ENCODE measurements at regions of chr9 and their contacts with region 1.

Region 1: DNA sequence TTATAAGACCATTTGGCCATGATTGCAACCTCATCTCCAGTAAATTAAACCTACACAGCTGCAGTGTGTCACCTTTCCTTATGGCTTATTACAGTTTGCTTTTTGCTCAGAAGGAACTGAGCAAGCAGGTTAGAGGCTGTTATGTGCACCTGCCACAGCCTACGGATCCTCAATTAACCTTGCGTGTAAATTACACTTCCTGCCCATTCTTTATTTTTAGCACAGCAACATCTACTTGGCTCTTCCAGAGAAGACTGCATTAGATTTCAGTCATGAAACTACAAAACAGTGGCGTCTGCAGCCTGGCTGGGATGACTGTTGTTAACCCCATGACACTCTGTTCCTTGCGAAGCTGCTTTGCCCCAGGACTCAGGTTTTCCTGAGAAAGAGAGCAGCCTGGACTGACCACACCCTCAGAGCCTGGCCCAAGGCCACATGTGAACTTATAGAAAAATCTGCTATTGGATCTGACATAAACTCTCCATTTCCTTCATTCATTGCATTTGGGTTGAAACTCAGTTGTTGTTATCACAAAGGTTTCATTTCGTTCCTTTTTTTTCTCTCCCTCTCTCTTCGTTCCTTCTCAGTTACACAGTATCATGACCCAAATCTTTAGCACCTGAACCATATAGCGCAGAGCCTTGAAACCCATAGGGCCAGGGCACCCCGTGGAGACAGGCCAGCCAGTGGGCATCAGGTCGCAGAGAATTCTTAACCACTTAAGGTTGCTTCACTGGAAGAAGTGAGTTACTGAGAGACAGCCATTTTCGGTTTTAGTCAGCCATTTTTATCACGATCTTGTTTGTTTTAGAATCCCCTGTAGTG is 138.6 kb downstream of the PALM2AKAP2 start:
- DNase-seq: no peak
- ATAC-seq: peak; percentile 24 to 58 (median 37)
- H3K4me3 ChIP-seq: no peak overlapping the region
- H3K27ac ChIP-seq: peak overlapping the region in 8 of 10 donors; percentile 7 to 59 (median 36)
- H3K4me1 ChIP-seq: peaks cover 0 to 75% (median 47%) of the 10 kb centered on the region in 9 donors
- H3K27me3 ChIP-seq: no peaks in the 10 kb centered on the region
- CTCF ChIP-seq: no peak

Region 2: DNA sequence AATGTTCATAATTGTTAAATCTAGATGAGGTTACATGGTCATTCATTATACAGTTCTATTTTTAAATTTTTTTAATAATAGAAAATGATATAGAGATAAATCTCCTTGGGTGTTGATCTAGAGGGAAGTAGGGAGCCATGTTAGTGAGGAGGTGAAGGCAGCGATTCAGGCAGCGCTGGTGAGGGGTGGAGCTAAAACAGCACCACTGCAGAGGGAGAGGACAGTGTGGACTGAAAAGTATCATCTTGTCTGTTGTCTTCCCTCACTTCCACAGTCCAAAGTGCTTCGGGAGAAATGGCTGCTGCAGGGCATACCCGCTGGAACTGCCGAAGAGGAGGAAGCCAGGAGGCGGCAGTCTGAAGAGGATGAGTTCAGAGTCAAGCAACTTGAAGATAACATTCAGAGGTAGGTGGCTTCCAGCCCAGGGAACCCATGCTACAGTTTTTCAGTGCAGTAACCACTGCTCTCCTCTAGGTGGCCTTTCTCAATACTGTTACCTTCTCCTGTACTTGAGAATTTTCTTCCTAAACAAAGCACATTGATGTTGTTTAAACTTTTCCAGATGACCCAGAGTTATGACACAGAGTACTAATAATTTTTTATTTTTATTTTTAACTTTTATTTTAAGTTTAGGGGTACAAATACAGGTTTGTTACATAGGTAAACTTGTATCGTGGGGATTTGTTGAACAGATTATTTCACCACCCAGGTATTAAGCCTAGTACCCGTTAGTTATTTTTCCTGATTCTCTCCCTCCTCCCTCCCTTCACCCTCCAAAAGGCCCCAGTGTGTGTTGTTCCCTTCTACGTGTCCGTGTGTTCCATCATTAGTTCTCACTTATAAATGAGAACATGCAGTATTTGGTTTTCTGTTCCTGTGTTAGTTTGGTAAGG is 38.0 kb before region 1 on chr9:
- intact Hi-C with region 1: no loop called
- DNase-seq: no peak
- ATAC-seq: no peak
- H3K4me3 ChIP-seq: no peak overlapping the region
- H3K27ac ChIP-seq: no peak overlapping the region
- H3K4me1 ChIP-seq: peaks cover 0 to 27% (median 5%) of the 10 kb centered on the region in 9 donors
- H3K27me3 ChIP-seq: no peaks in the 10 kb centered on the region
- CTCF ChIP-seq: peak; percentile 14 to 73 (median 56)

Region 3: DNA sequence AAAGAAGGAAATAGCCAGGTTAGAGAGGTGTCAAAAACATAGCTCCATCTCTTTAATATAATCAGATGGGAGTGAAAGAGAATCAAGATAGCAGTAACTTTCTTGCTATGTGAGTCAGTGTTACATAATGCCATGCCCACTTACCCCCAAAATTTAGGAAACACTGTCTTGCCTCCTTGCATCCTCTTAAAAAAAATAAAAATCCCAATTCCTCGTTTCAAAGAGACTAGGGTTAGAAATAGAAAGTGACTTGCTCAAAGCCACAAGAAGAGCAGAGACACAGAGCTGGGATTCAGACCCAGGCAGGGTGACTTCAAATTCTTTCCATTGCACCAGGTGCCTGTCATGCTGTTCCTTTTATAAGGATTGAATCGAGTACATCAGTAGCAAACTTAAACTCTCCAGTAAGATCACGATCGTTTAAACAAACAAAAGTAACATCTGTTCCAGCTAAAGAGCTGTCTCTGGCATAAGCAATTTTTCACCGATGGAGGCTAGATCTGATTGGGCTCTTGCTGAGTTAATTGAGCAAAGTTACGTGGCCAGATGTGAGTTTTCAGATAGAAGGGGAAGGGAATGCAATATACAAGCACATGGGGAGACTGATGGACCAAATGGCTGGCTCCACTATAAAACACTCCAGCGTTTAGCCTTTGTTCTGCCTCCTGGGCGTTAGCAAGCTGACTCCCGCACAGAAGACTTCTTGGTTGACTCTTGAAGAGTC is 38.3 kb after region 1 on chr9:
- intact Hi-C with region 1: loop called in 3 of 10 experiments (anchors 5 to 10 kb)
- DNase-seq: no peak
- ATAC-seq: peak in 3 of 8 donors; percentile 19 to 68 (median 33)
- H3K4me3 ChIP-seq: no peak overlapping the region
- H3K27ac ChIP-seq: peak overlapping the region in 1 of 10 donors; percentile 7
- H3K4me1 ChIP-seq: peaks cover 4 to 53% (median 17%) of the 10 kb centered on the region in 9 donors
- H3K27me3 ChIP-seq: no peaks in the 10 kb centered on the region
- CTCF ChIP-seq: no peak

Region 4: DNA sequence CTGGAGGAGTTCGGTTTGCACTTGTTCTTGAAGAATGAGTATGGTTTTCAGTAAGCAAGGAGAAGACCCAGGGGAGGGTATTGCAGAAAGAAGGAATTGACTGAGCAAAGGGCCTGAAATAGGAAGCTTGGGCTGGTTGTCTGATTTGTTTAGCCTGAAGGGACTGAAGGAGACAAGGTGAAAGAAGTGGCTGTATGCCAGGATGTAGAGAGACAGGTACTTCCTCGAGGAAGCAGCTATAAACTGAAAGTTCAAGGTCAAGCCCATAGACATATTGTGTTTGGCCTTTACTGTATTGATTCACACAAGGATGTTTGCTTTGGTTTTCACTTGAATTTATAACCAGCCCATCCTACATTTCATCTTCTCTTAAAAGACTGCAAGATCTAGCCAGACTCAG is 44.5 kb after region 1 on chr9:
- intact Hi-C with region 1: loop called in 4 of 10 experiments (anchors 5 to 10 kb)
- DNase-seq: no peak
- ATAC-seq: no peak
- H3K4me3 ChIP-seq: no peak overlapping the region
- H3K27ac ChIP-seq: no peak overlapping the region
- H3K4me1 ChIP-seq: peaks cover 0 to 52% (median 19%) of the 10 kb centered on the region in 9 donors
- H3K27me3 ChIP-seq: no peaks in the 10 kb centered on the region
- CTCF ChIP-seq: no peak

Region 5: DNA sequence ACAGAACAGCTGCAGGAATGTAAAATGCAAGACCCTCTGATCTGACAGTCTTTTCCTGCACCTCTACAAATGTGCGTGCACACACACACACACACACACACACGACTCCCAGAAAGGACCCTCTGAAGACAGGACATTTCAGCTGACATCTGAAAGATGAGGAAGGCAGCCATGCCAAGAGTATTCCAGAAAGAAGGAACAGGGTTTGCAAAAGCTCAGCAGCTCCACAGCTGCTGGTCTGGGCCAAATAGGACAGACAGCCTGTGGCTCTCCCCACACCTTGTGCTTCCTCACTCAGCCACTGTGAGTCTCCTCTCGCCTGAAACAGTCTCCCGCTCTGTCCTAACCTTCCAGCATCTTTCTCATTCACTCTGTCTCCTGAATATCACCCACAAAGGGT is 50.5 kb after region 1 on chr9:
- intact Hi-C with region 1: loop called in 3 of 10 experiments (anchors 5 to 10 kb)
- DNase-seq: peak in 1 of 2 donors; percentile 38
- ATAC-seq: peak in 7 of 8 donors; percentile 39 to 87 (median 77)
- H3K4me3 ChIP-seq: no peak overlapping the region
- H3K27ac ChIP-seq: peak overlapping the region; percentile 2 to 79 (median 56)
- H3K4me1 ChIP-seq: peaks cover 3 to 65% (median 50%) of the 10 kb centered on the region in 9 donors
- H3K27me3 ChIP-seq: no peaks in the 10 kb centered on the region
- CTCF ChIP-seq: peak in 7 of 9 donors; percentile 6 to 53 (median 36)

Region 6: DNA sequence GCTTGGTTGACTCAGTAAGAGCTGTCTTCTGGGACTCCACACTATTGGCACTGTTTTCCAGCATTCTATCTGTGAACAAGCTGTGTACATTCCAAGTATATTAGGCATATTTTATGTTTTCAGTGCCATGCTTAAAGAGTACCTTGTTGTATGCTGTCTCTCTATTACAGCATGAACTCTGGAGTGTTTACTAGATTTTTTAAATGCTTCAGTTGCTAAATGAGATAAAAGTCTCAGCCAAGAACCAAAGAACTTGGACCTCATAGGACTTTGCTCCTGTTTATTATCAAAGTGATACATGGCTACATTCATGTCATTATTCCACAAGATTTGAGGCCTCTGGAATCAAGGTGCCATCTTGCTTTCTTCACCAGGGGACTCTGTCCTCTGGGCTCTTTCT is 122.2 kb after region 1 on chr9:
- intact Hi-C with region 1: loop called in 2 of 10 experiments (anchors 5 kb)
- DNase-seq: no peak
- ATAC-seq: peak in 5 of 8 donors; percentile 15 to 56 (median 37)
- H3K4me3 ChIP-seq: no peak overlapping the region
- H3K27ac ChIP-seq: peak overlapping the region in 9 of 10 donors; percentile 24 to 80 (median 59)
- H3K4me1 ChIP-seq: peaks cover 4 to 52% (median 43%) of the 10 kb centered on the region in 9 donors
- H3K27me3 ChIP-seq: no peaks in the 10 kb centered on the region
- CTCF ChIP-seq: no peak

Region 7: DNA sequence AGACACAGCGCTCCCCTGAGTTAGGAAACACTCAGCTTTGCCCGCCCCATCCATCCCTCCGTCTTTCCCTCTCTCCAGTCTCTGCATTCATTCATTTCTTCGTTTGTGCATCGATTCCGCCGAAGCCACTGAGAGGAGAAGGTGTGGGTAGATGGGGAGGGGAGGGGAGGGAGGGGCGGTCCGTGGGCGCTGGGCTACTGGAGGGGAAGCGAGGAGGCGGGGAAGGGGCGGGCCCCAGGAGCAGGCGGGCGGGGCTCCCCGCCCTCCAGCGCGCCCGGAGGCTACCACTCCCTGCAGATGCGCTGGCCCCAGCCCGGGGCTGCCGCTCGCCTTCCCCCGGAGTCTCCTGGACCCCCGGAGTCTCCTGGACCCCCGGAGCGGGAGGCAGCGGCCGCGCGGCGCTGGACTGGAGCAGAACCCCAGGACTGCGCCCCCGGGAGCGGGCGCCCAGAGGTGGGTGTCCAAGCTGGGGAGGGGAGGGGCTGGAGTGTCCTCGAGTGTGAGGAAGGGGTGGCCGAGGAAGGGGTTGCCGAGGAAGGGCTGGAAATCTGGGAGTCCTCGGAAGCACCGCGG is 129.9 kb after region 1 on chr9:
- intact Hi-C with region 1: loop called in 2 of 10 experiments (anchors 5 kb)
- DNase-seq: peak; percentile 85 to 86
- ATAC-seq: peak; percentile 93 to 96 (median 95)
- H3K4me3 ChIP-seq: peak overlapping the region; percentile 58 to 92 (median 86)
- H3K27ac ChIP-seq: peak overlapping the region; percentile 41 to 91 (median 85)
- H3K4me1 ChIP-seq: peaks cover 0 to 59% (median 47%) of the 10 kb centered on the region in 9 donors
- H3K27me3 ChIP-seq: peaks cover 0 to 11% (median 0%) of the 10 kb centered on the region in 7 donors
- CTCF ChIP-seq: no peak

Region 8: GRCh38 chr9:110555551-110556331 is 637.2 kb after region 1 on chr9:
- intact Hi-C with region 1: no loop called
- DNase-seq: peak; percentile 12 to 33
- ATAC-seq: peak; percentile 75 to 92 (median 87)
- H3K4me3 ChIP-seq: no peak overlapping the region
- H3K27ac ChIP-seq: peak overlapping the region in 7 of 10 donors; percentile 18 to 75 (median 42)
- H3K4me1 ChIP-seq: peaks cover 0 to 28% (median 5%) of the 10 kb centered on the region in 9 donors
- H3K27me3 ChIP-seq: no peaks in the 10 kb centered on the region
- CTCF ChIP-seq: no peak

Measured in heart right ventricle (tissue), 16 donors.